ENCODE measurements at regions of chr15 and their contacts with region 1.

Region 1: GRCh38 chr15:68559345-68560310 is 19.2 kb upstream of the CORO2B start:
- DNase-seq: peak in 4 of 5 donors; percentile 65 to 67 (median 66)
- H3K4me3 ChIP-seq: peak overlapping the region; percentile 17 to 32
- H3K4me3 Mint-ChIP-seq: peak overlapping the region; percentile 75 to 91 (median 82)
- H3K27ac ChIP-seq: no peak overlapping the region
- H3K27ac Mint-ChIP-seq: peak overlapping the region in 1 of 7 donors; percentile 30
- H3K4me1 ChIP-seq: peaks cover 15% of the 10 kb centered on the region
- H3K4me1 Mint-ChIP-seq: peaks cover 11 to 23% (median 15%) of the 10 kb centered on the region in 4 donors
- H3K27me3 ChIP-seq: no peaks in the 10 kb centered on the region
- H3K27me3 Mint-ChIP-seq: peaks cover 33 to 50% of the 10 kb centered on the region in 2 donors

Region 2: GRCh38 chr15:68572921-68573320 is 13.3 kb after region 1 on chr15:
- CTCF ChIA-PET with region 1: interaction called, 10 read pairs
- POLR2A ChIA-PET with region 1: no interaction called
- intact Hi-C with region 1: no loop called
- DNase-seq: no peak
- H3K4me3 ChIP-seq: no peak overlapping the region
- H3K4me3 Mint-ChIP-seq: no peak overlapping the region
- H3K27ac ChIP-seq: no peak overlapping the region
- H3K27ac Mint-ChIP-seq: peak overlapping the region in 1 of 7 donors; percentile 16
- H3K4me1 ChIP-seq: peaks cover 6% of the 10 kb centered on the region
- H3K4me1 Mint-ChIP-seq: peaks cover 3 to 14% (median 7%) of the 10 kb centered on the region in 4 donors
- H3K27me3 ChIP-seq: peaks cover 18% of the 10 kb centered on the region
- H3K27me3 Mint-ChIP-seq: peaks cover 56 to 63% of the 10 kb centered on the region in 2 donors

Region 3: GRCh38 chr15:68672781-68673205 is 113.2 kb after region 1 on chr15:
- CTCF ChIA-PET with region 1: interaction called, 13 read pairs
- POLR2A ChIA-PET with region 1: no interaction called
- intact Hi-C with region 1: loop called (anchors 1 kb)
- DNase-seq: no peak
- H3K4me3 ChIP-seq: no peak overlapping the region
- H3K4me3 Mint-ChIP-seq: no peak overlapping the region
- H3K27ac ChIP-seq: no peak overlapping the region
- H3K27ac Mint-ChIP-seq: no peak overlapping the region
- H3K4me1 ChIP-seq: no peaks in the 10 kb centered on the region
- H3K4me1 Mint-ChIP-seq: peaks cover 0 to 5% (median 3%) of the 10 kb centered on the region in 4 donors
- H3K27me3 ChIP-seq: no peaks in the 10 kb centered on the region
- H3K27me3 Mint-ChIP-seq: peaks cover 9 to 19% of the 10 kb centered on the region in 2 donors

Region 4: GRCh38 chr15:68783226-68784058 is 223.8 kb after region 1 on chr15:
- CTCF ChIA-PET with region 1: no interaction called
- POLR2A ChIA-PET with region 1: no interaction called
- intact Hi-C with region 1: loop called (anchors 5 kb)
- DNase-seq: peak; percentile 58 to 67 (median 60)
- H3K4me3 ChIP-seq: no peak overlapping the region
- H3K4me3 Mint-ChIP-seq: peak overlapping the region in 1 of 8 donors; percentile 8
- H3K27ac ChIP-seq: no peak overlapping the region
- H3K27ac Mint-ChIP-seq: peak overlapping the region in 6 of 7 donors; percentile 12 to 89 (median 74)
- H3K4me1 ChIP-seq: peaks cover 16% of the 10 kb centered on the region
- H3K4me1 Mint-ChIP-seq: peaks cover 18 to 24% (median 21%) of the 10 kb centered on the region in 4 donors
- H3K27me3 ChIP-seq: no peaks in the 10 kb centered on the region
- H3K27me3 Mint-ChIP-seq: no peaks in the 10 kb centered on the region

Region 5: DNA sequence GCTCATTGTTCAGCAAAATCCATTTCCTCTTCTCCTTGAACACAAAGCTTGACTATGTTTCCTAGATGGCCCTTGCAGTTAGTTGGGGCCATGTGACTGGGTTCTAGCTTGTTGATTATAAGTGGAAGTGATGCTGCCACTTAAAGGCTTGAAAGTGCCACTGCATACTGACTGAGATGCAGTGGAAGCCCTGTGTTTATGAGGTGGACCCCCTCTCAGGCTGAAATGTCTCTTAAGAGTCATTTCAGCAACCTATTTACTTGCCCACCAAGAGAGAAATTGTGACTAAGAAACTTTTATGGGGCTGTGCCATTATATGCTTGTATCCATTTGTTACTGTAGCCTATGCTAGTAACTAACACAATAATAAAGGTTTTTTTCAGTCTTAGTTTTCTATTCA is 269.4 kb after region 1 on chr15:
- CTCF ChIA-PET with region 1: interaction called, 6 read pairs
- POLR2A ChIA-PET with region 1: no interaction called
- intact Hi-C with region 1: loop called (anchors 5 kb)
- DNase-seq: peak in 4 of 5 donors; percentile 12 to 27 (median 24)
- H3K4me3 ChIP-seq: no peak overlapping the region
- H3K4me3 Mint-ChIP-seq: no peak overlapping the region
- H3K27ac ChIP-seq: no peak overlapping the region
- H3K27ac Mint-ChIP-seq: peak overlapping the region in 1 of 7 donors; percentile 31
- H3K4me1 ChIP-seq: peaks cover 4% of the 10 kb centered on the region
- H3K4me1 Mint-ChIP-seq: peaks cover 4 to 13% (median 7%) of the 10 kb centered on the region in 4 donors
- H3K27me3 ChIP-seq: no peaks in the 10 kb centered on the region
- H3K27me3 Mint-ChIP-seq: peaks cover 1 to 4% of the 10 kb centered on the region in 2 donors

Region 6: GRCh38 chr15:68924866-68925560 is 365.4 kb after region 1 on chr15:
- CTCF ChIA-PET with region 1: interaction called, 11 read pairs
- POLR2A ChIA-PET with region 1: no interaction called
- intact Hi-C with region 1: no loop called
- DNase-seq: peak; percentile 30 to 61 (median 43)
- H3K4me3 ChIP-seq: no peak overlapping the region
- H3K4me3 Mint-ChIP-seq: no peak overlapping the region
- H3K27ac ChIP-seq: no peak overlapping the region
- H3K27ac Mint-ChIP-seq: peak overlapping the region in 1 of 7 donors; percentile 7
- H3K4me1 ChIP-seq: no peaks in the 10 kb centered on the region
- H3K4me1 Mint-ChIP-seq: no peaks in the 10 kb centered on the region
- H3K27me3 ChIP-seq: no peaks in the 10 kb centered on the region
- H3K27me3 Mint-ChIP-seq: peaks cover 11 to 27% of the 10 kb centered on the region in 2 donors